H1 (cell line): ENCODE measurements at regions of chr1 and their contacts with region 1.

Region 1: DNA sequence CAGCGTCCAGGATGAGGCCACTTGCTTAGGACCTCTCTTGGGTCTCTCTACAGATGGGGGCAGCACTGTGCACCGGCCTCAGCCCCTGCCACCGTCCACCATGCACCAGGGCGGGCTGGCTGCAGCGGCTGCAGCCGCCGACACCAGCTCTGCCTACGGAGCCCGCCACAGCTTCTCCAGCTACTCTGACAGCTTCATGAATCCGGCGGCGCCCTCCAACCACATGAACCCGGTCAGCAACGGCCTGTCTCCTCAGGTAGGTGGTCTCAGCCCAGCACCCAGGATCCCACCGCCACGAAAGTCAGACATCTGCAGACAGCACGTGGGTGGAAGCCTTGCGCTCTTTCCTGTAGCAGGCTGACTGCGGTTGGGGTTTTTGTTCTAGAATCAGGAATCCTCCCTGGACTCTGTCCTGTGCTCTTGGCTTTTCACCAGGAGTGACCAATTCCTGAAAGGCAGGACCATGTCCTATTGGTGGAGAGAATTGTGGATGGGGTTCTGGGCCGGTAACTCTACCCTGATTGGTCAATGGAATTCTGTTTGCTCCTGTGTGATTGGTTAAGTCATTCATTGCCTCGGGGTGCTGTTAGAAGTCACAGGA is 72.5 kb downstream of the PAX7 start:
- DNase-seq: peak in 1 of 2 experiments; percentile 65
- H3K4me3 ChIP-seq: peak overlapping the region in 1 of 4 experiments; percentile 4; a peak in 1 of 8 replicates
- H3K27ac ChIP-seq: no peak overlapping the region
- H3K4me1 ChIP-seq: peaks cover 0 to 4% (median 0%) of the 10 kb centered on the region in 4 experiments; a peak in 3 of 7 replicates
- H3K27me3 ChIP-seq: peaks cover 0 to 8% (median 4%) of the 10 kb centered on the region in 4 experiments; a peak in 5 of 7 replicates
- CTCF ChIP-seq: peak; percentile 41 to 56 (median 49); a peak in 3 of 4 replicates
- EP300 ChIP-seq: no peak
- POLR2A ChIP-seq: no peak
- RAD21 ChIP-seq: peak; percentile 40 to 57

Region 2: GRCh38 chr1:18583326-18583941 is 119.7 kb before region 1 on chr1:
- CTCF ChIA-PET with region 1: no interaction called
- POLR2A ChIA-PET with region 1: no interaction called
- DNase-seq: no peak
- H3K4me3 ChIP-seq: no peak overlapping the region
- H3K27ac ChIP-seq: no peak overlapping the region
- H3K4me1 ChIP-seq: no peaks in the 10 kb centered on the region; a peak in 1 of 7 replicates
- H3K27me3 ChIP-seq: peaks cover 0 to 2% (median 0%) of the 10 kb centered on the region in 4 experiments; a peak in 4 of 7 replicates
- CTCF ChIP-seq: no peak
- EP300 ChIP-seq: no peak
- POLR2A ChIP-seq: no peak
- RAD21 ChIP-seq: no peak

Region 3: DNA sequence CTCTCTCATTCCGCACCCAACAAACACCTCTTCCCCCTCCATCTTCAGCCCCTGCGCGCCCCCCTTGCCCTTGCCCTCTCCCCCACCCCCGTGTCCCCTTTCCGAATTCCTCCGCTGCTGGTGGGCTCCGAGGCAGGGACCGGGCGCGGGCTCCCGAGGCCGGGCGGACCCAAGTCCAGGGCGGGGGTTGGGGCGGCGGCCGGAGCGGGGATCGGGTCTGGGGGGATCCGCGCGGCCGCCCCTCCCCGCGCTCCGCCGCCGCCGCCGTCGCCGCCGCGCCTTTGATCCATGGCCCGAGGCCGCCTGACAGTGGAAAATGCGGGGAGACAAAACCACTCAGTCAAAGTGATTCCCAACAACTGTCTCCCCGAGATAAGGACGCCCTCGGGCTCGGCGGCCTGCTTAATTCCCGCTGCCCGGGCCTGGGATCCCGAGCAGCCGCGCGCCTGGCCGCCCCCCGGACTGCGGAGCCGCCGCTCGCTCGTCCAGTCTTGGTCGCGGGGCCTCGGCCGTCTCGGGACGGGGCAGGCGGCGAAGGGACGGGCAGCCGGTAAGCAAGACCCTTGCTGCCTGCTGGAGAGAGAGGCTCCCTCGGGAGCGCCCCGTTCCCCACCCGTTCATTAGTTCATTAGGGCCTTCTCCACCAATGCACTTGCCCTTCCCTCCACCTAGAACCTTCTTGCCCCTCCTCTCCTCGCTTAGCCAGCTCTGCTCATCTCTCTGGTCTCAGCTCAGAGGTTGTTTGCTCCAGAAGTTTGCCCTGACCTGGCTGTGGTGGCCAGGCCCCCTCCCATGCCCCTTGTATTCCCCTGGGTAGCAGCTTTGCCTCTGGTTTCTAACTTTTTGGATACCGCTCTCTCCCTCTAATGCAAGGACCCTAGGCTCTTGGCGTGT is 13.9 kb after region 1 on chr1:
- CTCF ChIA-PET with region 1: interaction called, 12 read pairs
- POLR2A ChIA-PET with region 1: interaction called, 3 read pairs
- DNase-seq: peak in 1 of 2 experiments; percentile 63
- H3K4me3 ChIP-seq: peak overlapping the region; percentile 19 to 71 (median 33)
- H3K27ac ChIP-seq: no peak overlapping the region
- H3K4me1 ChIP-seq: peaks cover 0 to 6% (median 1%) of the 10 kb centered on the region in 4 experiments; a peak in 3 of 7 replicates
- H3K27me3 ChIP-seq: peaks cover 23 to 56% (median 45%) of the 10 kb centered on the region in 4 experiments
- CTCF ChIP-seq: no peak
- EP300 ChIP-seq: no peak
- POLR2A ChIP-seq: no peak
- RAD21 ChIP-seq: no peak

Region 4: DNA sequence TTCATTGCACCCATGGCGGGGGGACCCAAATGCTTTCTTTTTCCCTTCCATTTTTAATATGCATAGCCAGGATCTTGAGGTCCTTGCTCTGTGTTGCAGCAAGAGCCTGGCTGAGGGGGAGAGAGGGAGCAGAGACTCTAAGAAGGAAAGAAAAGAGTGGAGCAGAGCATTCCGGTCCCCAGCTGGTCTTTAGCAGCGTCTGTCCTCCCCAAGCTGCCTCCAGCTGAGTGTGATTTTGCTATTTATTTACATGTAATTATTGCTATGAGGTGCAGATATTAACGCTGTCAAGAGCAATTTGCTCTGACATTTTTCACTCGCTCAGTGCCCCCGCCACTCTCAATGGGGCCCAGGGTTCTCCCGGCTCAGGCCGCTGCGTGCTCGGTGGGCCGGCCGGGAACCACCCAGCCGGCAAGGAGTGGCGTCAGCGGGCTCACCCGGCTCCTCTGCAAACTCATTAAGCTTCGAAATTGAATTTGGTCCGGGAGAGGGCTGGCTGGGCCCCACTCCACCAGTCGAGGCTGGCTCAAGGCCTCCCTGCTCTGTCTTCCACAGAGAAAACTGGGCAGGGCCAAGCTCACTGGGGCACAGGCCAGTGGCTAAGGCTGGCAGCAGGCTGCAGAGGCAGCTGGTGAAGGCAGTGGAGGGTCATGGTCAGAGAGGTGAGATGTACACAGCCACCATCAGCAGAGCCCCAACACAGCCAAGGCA is 20.7 kb after region 1 on chr1:
- CTCF ChIA-PET with region 1: interaction called, 10 read pairs
- POLR2A ChIA-PET with region 1: interaction called, 3 read pairs
- DNase-seq: peak in 1 of 2 experiments; percentile 55
- H3K4me3 ChIP-seq: no peak overlapping the region
- H3K27ac ChIP-seq: no peak overlapping the region
- H3K4me1 ChIP-seq: peaks cover 0 to 13% (median 3%) of the 10 kb centered on the region in 4 experiments; a peak in 3 of 7 replicates
- H3K27me3 ChIP-seq: peaks cover 0 to 23% (median 14%) of the 10 kb centered on the region in 4 experiments; a peak in 6 of 7 replicates
- CTCF ChIP-seq: no peak
- EP300 ChIP-seq: no peak
- POLR2A ChIP-seq: no peak
- RAD21 ChIP-seq: no peak